ENCODE measurements at regions of chrX and their contacts with region 1.

Region 1: GRCh38 chrX:79096145-79096556 is 48.3 kb upstream of the GPR174 start:
- DNase-seq: no peak
- H3K4me3 Mint-ChIP-seq: peak overlapping the region; percentile 76
- H3K27ac Mint-ChIP-seq: peak overlapping the region; percentile 92
- H3K4me1 Mint-ChIP-seq: peaks cover 39% of the 10 kb centered on the region
- H3K27me3 Mint-ChIP-seq: no peaks in the 10 kb centered on the region

Region 2: GRCh38 chrX:78442426-78442825 is 653.7 kb before region 1 on chrX:
- intact Hi-C with region 1: no loop called
- DNase-seq: no peak
- H3K4me3 Mint-ChIP-seq: no peak overlapping the region
- H3K27ac Mint-ChIP-seq: no peak overlapping the region
- H3K4me1 Mint-ChIP-seq: no peaks in the 10 kb centered on the region
- H3K27me3 Mint-ChIP-seq: no peaks in the 10 kb centered on the region

Region 3: DNA sequence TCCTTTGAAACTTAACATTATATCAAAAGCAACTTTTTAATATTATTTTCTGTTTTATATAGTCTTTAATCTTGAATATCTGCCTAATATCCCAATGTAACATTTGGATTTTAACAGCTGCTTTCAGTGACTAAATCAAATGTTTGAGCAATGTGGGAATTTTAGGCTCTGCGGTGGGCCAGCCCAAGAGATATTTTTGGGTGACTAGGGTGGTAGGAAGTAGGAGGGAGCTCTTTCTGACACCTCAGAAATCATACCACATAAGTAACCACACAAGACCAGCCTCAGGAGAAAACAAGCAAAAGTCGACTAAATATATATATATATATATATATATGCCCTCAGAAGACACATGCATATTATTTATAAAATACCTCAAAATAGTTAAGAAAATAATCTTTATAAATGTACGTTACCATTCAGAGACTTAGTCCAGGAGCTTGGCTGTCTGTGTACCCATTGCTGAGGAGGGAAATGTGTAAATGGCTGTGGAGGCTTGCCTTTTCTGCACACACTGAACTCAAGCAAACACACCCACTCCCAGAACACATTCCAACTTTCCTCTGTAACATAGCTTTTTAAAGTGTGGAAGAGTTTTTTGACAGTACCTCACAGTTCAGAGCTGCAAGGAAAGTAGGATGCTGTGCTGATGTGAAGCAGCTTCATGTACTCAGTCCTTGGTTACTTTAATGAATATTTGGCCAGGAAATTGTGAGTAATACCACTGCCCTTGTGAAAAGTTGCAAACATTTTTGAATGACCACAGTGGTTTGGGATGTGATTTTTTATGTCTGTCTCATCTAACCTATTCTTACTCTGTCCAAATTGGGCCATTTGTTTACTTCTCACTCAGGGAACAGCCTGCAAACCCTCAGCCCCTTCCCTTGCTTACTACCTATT is 437.1 kb before region 1 on chrX and contains the start of gene RTL3:
- intact Hi-C with region 1: no loop called
- DNase-seq: no peak
- H3K4me3 Mint-ChIP-seq: peak within 1 kb of the TSS; percentile 74
- H3K27ac Mint-ChIP-seq: peak within 1 kb of the TSS; percentile 78
- H3K4me1 Mint-ChIP-seq: peaks cover 12% of the 10 kb centered on the region
- H3K27me3 Mint-ChIP-seq: no peaks in the 10 kb centered on the region
- total RNA-seq, gene RTL3: not detected in 2 replicates

Region 4: DNA sequence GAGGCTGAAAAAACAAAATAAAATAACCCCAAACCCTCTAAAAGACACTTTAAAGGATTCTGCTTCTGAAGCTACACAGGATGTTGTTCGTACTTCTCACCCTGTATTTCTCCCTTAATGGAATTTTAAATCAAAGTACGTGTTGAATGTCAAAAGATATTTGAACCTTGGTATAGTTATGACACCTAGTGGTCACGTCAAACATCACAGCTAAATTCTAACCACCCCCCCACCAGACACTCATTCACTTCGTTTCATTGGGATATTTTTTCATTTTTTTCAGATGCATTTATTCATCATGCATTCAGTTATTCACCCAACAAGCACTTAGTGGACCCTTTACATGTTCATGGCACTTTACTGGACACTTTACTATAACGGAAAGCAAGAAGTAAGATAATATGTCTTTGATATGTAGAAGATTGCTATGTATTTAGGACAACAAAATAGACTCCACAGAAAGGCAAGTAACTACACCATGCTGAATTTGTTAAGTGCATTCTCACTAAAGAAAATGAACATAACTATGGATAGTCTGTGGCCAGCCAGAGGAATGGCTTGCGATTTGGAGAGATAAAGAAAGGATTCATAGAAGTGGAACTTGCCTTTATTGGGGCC is 14.1 kb before region 1 on chrX:
- intact Hi-C with region 1: no loop called
- DNase-seq: peak; percentile 78
- H3K4me3 Mint-ChIP-seq: peak overlapping the region; percentile 78
- H3K27ac Mint-ChIP-seq: peak overlapping the region; percentile 87
- H3K4me1 Mint-ChIP-seq: peaks cover 14% of the 10 kb centered on the region
- H3K27me3 Mint-ChIP-seq: no peaks in the 10 kb centered on the region

Region 5: DNA sequence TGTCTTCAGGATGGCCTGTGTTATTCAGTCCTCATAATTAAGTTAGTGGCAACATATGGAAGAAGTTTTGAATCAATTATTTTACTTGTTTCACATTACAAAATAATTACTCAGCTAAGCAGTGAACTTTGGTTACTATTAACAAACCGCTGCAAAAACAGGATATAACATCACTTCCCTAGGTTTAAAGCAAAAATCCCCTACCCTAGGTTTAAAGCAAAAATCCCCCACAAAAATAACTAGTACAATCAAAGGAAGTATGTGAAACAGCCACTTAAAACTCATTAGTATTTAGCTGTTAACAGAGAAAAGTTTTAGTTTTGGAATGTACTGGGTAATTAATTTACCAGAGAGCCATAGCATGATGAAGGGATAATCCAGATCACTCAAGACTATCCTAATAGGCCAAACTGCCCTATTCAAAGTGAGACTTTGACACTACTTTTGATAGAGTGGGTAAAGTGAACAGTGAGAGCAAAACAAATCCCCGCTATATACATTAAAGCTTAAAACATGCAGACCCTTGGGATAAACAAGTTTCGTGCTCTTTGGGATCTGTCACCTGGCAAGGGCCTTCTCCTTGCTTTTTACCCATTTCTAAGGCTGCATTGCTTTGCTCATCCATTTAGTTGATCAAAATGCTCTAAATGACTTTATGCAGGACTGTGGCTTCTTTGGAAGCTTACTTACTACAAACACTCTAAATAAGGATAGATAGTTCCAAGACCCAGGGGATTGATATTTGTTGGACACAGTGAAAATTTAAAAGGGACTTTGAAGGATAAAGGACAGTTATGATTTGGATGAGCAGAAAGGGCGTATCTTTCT is 12.0 kb after region 1 on chrX:
- intact Hi-C with region 1: loop called (anchors 2 kb)
- DNase-seq: peak; percentile 60
- H3K4me3 Mint-ChIP-seq: peak overlapping the region; percentile 65
- H3K27ac Mint-ChIP-seq: peak overlapping the region; percentile 95
- H3K4me1 Mint-ChIP-seq: peaks cover 28% of the 10 kb centered on the region
- H3K27me3 Mint-ChIP-seq: no peaks in the 10 kb centered on the region